AG04450 (cell line): ENCODE measurements at regions of chr9 and their contacts with region 1.

Region 1: DNA sequence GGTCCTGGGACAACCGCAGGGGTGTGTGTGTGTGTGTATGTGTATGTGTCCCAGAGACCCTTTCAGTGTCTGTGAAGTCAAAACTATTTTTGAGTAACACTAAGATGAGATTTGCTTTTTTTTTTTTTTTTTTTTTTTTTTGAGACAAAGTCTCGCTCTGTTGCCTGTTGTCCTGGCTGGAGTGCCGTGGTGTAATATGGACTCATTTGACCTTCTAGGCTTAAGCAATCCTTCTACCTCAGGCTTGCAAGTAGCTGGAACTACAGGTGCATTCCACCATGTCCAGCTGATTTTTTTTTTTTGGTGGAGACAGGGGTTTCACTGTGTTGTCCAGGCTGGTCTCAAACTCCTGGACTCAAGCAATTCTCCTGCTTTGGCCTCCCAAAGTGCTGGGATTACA is 97.4 kb upstream of the KLF9 start:
- DNase-seq: no peak
- H3K4me3 ChIP-seq: no peak overlapping the region
- H3K27ac ChIP-seq: no peak overlapping the region
- H3K27me3 ChIP-seq: no peaks in the 10 kb centered on the region
- CTCF ChIP-seq: no peak

Region 2: GRCh38 chr9:70526902-70527301 is 15.0 kb after region 1 on chr9:
- CTCF ChIA-PET with region 1: interaction called, 6 read pairs
- POLR2A ChIA-PET with region 1: interaction called, 14 read pairs
- DNase-seq: no peak
- H3K4me3 ChIP-seq: no peak overlapping the region
- H3K27ac ChIP-seq: no peak overlapping the region
- H3K27me3 ChIP-seq: peaks cover 5% of the 10 kb centered on the region
- CTCF ChIP-seq: no peak

Region 3: GRCh38 chr9:70563431-70564204 is 51.8 kb after region 1 on chr9:
- CTCF ChIA-PET with region 1: no interaction called
- POLR2A ChIA-PET with region 1: no interaction called
- DNase-seq: no peak
- H3K4me3 ChIP-seq: no peak overlapping the region
- H3K27ac ChIP-seq: peak overlapping the region; percentile 55
- H3K27me3 ChIP-seq: no peaks in the 10 kb centered on the region
- CTCF ChIP-seq: no peak

Region 4: DNA sequence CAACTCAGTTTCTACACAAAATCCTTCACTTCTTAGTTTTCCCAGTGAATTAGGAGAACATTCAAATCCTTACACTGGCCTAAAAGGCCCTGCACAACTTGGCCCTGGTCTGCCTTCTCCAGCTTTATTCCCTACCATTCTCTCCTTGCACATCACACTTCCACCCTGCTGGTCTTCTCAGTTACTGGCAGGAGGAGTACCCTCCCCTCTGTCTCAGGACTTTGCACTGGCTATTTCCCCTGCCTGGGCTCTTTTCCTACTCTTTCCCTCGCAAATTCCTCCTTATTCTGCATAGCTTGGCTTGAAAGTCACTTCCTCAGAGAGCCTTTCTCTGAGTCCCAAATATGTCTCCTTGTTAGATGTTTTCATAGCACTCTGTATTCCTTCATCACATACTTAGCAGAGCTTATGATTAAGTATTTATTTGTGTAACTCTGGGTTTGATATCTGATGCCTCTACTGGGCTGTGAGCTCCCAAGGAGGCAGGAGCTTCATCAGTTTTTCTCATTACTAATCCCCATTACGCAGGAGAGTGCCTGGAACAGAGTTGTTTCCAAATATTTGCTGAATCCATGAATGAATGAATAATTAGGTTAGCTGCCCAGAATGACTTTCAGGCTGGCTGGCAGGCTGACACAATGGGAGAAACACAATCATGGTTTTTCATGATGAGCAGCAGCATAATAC is 62.4 kb after region 1 on chr9:
- CTCF ChIA-PET with region 1: interaction called, 10 read pairs
- POLR2A ChIA-PET with region 1: no interaction called
- DNase-seq: no peak
- H3K4me3 ChIP-seq: no peak overlapping the region
- H3K27ac ChIP-seq: no peak overlapping the region
- H3K27me3 ChIP-seq: no peaks in the 10 kb centered on the region
- CTCF ChIP-seq: no peak